ENCODE measurements at regions of chr19 and their contacts with region 1.

Region 1: DNA sequence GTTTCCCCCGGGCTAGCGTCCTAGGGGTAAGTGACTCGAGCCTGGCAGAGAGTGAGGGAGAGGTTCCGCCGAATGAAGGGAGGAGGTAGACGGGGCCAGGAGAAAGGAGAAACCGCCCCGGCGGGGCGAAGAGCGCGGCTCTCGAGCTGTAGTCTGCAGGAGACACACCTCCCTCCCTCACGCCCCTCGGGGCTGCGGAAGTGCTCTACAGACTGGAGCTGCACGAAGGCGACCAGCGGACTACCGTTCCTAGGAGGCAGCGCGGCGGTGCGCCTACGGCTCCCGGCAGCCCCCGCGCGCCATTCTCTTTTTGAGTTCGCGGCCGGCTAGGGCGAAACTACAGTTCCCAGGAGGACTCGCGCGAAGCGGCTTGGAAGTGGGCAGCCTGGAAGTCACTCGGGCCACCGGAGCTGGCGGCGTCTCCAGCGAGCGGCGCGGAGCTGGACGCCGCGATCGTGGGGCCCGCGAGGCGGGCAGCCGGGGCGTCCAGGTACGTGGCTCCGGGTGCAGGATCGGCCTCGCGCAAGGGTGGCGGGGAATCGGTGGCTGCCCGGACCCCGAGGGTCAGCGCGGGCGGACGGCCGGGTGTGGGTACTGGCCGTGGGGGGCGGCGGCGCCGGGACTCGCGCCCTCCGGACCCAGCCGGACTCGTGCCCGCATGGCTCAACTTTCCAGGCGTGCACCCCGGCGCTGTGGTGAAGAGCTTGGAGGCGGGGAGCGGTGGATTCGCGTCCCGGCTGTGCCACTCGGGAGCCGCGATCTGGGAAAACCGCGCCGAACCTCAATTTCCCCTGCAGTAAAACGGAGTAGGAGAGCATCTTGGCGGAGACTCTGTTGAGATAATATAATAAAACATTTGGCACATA is at the start of gene SIPA1L3:
- DNase-seq: peak; percentile 96
- H3K4me3 Mint-ChIP-seq: peak within 1 kb of the TSS; percentile 73
- H3K27ac Mint-ChIP-seq: peak within 1 kb of the TSS; percentile 74
- H3K4me1 Mint-ChIP-seq: peaks cover 19% of the 10 kb centered on the region
- H3K27me3 Mint-ChIP-seq: no peaks in the 10 kb centered on the region
- total RNA-seq, gene SIPA1L3: 10.3 to 12.1 TPM

Region 2: DNA sequence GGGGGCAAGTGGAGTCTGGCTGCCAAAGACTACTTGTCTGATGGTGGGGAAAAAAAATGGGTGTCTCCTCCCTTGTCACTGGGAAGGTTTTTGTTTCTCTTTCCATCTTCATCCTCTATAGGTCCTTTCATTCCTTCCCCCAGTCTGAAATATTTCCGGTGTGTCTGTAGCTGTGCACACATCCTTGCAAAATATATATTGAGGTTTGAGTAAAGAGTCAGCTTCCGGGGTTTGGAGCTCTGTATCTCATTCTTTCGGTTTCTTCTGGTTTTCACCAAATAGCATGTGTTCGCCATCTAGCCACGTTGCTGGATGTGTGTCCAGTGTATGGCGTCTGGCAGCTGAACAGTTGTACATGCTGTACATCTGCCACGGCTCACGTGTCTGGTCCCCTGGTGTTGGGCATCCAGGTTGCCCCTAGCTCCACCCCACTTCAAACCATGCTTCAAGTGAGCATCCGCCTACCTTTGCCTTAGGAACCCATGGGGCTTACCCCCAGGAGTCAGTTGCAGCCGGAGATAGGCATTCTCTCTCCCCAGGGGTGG is 142.1 kb after region 1 on chr19:
- CTCF ChIA-PET with region 1: interaction called, 13 read pairs
- POLR2A ChIA-PET with region 1: no interaction called
- intact Hi-C with region 1: loop called (anchors 1 kb)
- DNase-seq: peak; percentile 74
- H3K4me3 Mint-ChIP-seq: peak overlapping the region; percentile 68
- H3K27ac Mint-ChIP-seq: peak overlapping the region; percentile 96
- H3K4me1 Mint-ChIP-seq: peaks cover 46% of the 10 kb centered on the region
- H3K27me3 Mint-ChIP-seq: no peaks in the 10 kb centered on the region

Region 3: DNA sequence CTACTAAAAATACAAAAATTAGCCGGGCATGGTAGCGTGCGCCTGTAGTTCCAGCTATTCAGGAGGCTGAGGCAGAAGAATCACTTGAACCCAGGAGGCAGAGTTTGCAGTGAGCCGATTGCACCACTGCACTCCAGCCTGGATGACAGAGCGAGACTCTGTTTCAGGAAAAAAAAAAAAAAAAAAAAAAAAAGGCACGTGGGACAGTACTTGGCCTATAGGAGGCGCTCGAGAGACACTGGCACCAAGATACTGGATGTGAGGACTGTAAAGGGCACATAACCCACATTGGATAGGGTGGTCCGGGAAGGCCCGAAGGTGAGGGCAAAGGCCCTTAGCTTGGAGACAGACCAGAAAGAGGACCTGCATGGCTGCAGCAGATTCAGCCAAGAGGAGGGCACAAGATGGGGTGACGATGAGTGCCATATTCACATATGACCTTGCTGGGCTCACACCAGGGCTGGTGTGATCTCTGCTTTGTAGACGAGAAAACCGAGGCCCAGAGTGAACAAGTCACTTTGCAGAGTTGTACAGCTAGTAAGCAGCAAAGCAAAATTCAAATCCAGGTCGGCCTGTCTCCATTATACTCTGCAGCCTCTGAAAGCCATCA is 227.5 kb after region 1 on chr19:
- CTCF ChIA-PET with region 1: interaction called, 23 read pairs
- POLR2A ChIA-PET with region 1: no interaction called
- intact Hi-C with region 1: no loop called
- DNase-seq: peak; percentile 47
- H3K4me3 Mint-ChIP-seq: no peak overlapping the region
- H3K27ac Mint-ChIP-seq: no peak overlapping the region
- H3K4me1 Mint-ChIP-seq: no peaks in the 10 kb centered on the region
- H3K27me3 Mint-ChIP-seq: no peaks in the 10 kb centered on the region

Region 4: DNA sequence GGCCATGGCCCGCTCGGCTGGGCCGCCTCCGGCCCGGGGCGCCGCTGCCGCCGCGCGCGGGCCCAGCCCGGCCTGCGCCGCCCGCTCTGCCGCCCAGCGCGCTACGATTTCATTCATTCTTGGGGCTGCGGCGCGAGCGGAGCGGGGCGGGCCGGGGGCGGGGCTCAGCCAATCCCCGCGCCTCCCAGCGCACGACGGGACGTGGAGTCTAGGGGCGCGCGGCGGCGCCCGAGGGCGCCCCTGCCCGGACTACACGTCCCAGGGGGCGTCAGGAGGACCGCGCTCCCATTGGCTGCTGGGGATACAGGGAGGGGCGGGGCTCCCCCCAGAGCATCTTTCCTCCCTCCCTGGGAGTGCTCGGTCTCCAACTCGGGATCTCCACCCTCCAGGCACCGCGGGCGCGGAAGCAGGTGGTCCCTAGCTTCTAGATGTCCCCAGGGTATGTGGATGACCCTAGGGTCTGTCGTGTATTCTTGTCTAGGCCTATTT is 322.5 kb after region 1 on chr19:
- CTCF ChIA-PET with region 1: interaction called, 20 read pairs
- POLR2A ChIA-PET with region 1: no interaction called
- intact Hi-C with region 1: loop called (anchors 2 kb)
- DNase-seq: peak; percentile 83
- H3K4me3 Mint-ChIP-seq: no peak overlapping the region
- H3K27ac Mint-ChIP-seq: no peak overlapping the region
- H3K4me1 Mint-ChIP-seq: peaks cover 12% of the 10 kb centered on the region
- H3K27me3 Mint-ChIP-seq: peaks cover 43% of the 10 kb centered on the region

Region 5: DNA sequence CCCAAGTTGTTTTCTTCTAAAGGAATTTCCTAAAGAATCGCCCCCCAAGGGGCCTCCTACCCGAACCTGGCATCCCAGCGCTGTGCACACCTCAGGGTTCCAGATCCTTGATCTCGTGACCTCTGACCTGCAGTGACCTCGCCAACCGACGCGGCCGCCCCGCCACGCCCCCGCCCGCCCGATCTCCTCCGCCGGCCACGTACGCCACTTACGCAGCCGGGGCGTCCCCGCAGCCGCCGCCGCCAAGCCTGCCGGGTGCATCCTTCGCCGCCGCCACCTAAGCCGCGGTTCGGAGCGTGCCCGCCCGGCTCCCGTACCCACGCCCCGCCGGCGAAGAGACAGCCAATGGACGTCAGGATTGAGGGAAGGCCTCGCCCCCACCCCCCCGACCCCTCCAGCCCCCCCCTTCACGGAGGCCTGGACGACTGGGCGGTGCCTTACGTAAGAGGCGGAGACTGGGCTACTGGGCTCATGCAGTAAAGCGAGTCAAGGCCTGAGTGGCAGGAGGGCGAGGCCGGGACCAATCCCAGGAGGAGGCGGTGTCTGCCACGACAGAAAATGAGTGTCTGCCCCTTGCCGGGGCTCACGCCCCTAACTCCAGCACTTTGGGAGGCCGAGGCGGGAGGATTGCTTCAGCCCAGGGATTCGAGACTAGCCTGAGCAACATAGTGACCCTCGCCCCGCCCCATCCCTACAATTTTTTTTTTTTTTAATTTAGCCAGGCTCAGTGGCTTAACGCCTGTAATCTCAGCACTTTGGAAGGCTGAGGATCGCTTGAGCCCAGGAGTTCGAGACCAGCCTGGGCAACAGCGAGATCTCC is 408.8 kb after region 1 on chr19 and contains the start of gene YIF1B:
- CTCF ChIA-PET with region 1: no interaction called
- POLR2A ChIA-PET with region 1: no interaction called
- intact Hi-C with region 1: loop called (anchors 5 kb)
- DNase-seq: peak; percentile 98
- H3K4me3 Mint-ChIP-seq: peak within 1 kb of the TSS; percentile 83
- H3K27ac Mint-ChIP-seq: peak within 1 kb of the TSS; percentile 88
- H3K4me1 Mint-ChIP-seq: peaks cover 38% of the 10 kb centered on the region
- H3K27me3 Mint-ChIP-seq: no peaks in the 10 kb centered on the region
- total RNA-seq, gene YIF1B: 79.7 to 82.3 TPM

Measured in activated CD4-positive, alpha-beta memory T cell treated with anti-CD3 and anti-CD28 coated beads for 36 hours (primary cell).